ENCODE measurements at regions of chr12 and their contacts with region 1.

Region 1: GRCh38 chr12:101773650-101774162 is 34.4 kb upstream of the SYCP3 start:
- DNase-seq: peak; percentile 16
- H3K4me3 ChIP-seq: no peak overlapping the region
- CTCF ChIP-seq: peak; percentile 79

Region 2: GRCh38 chr12:101759396-101760047 is 14.2 kb before region 1 on chr12:
- CTCF ChIA-PET with region 1: interaction called, 41 read pairs
- POLR2A ChIA-PET with region 1: no interaction called
- DNase-seq: no peak
- H3K4me3 ChIP-seq: no peak overlapping the region
- CTCF ChIP-seq: peak; percentile 55

Region 3: GRCh38 chr12:101891462-101892273 is 118.0 kb after region 1 on chr12:
- CTCF ChIA-PET with region 1: interaction called, 14 read pairs
- POLR2A ChIA-PET with region 1: no interaction called
- DNase-seq: peak; percentile 82
- H3K4me3 ChIP-seq: no peak overlapping the region
- CTCF ChIP-seq: no peak

Measured in AG04449 (cell line).